ENCODE measurements at regions of chr1 and their contacts with region 1.

Region 1: GRCh38 chr1:156625436-156626078 is 6.3 kb downstream of the HAPLN2 start:
- DNase-seq: peak; percentile 64
- H3K4me3 ChIP-seq: peak overlapping the region; percentile 23
- H3K27ac ChIP-seq: no peak overlapping the region
- H3K4me1 ChIP-seq: peaks cover 21% of the 10 kb centered on the region
- H3K27me3 ChIP-seq: peaks cover 38% of the 10 kb centered on the region
- CTCF ChIP-seq: peak; percentile 65

Region 2: GRCh38 chr1:156659994-156660751 is 34.6 kb after region 1 on chr1:
- intact Hi-C with region 1: loop called (anchors 2 kb)
- DNase-seq: peak; percentile 96
- H3K4me3 ChIP-seq: peak overlapping the region; percentile 30
- H3K27ac ChIP-seq: peak overlapping the region; percentile 82
- H3K4me1 ChIP-seq: peaks cover 38% of the 10 kb centered on the region
- H3K27me3 ChIP-seq: no peaks in the 10 kb centered on the region
- CTCF ChIP-seq: peak; percentile 99

Region 3: DNA sequence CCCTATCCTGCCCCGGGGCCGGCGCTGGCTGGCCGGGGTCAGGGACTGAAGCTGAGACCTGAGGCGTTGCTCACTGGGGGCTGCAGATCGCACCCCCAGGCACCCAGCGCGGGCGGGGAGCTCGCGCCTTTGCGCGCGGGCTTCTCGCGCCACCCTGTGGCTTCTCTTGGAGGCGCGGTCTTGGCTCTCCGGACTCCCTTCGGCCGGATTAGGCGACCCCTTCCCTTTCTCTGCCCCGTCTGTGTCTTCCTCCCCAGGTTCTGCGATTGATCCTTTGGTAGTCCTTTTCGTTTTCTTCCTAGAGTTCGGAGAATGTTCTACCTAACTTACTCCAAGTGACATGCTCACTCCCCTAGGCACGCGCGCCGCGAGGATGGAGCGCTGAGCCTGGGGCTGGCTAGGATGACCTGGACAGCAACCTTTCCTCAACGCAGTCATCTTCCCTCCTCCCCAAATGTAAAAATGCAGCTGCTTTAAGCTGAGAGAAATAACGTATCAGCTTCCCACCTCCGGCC is 234.6 kb after region 1 on chr1:
- intact Hi-C with region 1: loop called (anchors 10 kb)
- DNase-seq: peak; percentile 49
- H3K4me3 ChIP-seq: peak overlapping the region; percentile 27
- H3K27ac ChIP-seq: no peak overlapping the region
- H3K4me1 ChIP-seq: peaks cover 7% of the 10 kb centered on the region
- H3K27me3 ChIP-seq: peaks cover 43% of the 10 kb centered on the region
- CTCF ChIP-seq: peak; percentile 86

Region 4: DNA sequence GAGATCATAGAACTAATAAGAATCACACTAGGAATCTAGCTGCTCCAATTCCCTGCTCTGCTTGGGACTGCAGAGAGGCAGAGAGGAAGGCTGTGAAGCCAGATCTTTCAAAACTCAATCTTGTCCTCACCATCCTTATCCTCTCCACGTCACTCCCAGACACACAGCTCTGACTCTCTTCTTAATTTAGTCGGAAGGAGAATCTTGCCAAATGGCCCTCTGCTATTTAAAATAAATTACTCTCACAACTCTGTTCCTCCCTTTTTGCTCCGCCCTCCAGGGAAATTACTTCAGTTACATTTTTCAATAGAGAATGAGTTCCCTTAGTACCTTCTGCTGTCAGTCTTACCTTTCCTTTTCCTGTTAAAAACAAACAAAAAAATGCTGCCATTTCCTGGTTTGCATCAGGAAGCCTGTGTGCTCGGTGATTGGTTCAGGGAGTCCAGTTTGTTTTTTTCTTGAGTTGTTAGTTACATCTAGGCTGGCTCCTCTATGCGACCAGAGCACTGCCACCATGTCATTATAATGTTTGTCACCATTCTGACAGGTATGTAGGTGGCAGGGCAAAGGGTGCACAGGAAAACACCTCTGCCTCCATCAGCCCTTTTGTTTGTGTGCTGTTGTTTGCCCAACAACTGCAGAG is 846.6 kb after region 1 on chr1:
- intact Hi-C with region 1: no loop called
- DNase-seq: peak; percentile 50
- H3K4me3 ChIP-seq: no peak overlapping the region
- H3K27ac ChIP-seq: peak overlapping the region; percentile 53
- H3K4me1 ChIP-seq: no peaks in the 10 kb centered on the region
- H3K27me3 ChIP-seq: no peaks in the 10 kb centered on the region
- CTCF ChIP-seq: no peak

Measured in colonic mucosa (tissue), 4 donors.